ENCODE measurements at regions of chr5 and their contacts with region 1.

Region 1: DNA sequence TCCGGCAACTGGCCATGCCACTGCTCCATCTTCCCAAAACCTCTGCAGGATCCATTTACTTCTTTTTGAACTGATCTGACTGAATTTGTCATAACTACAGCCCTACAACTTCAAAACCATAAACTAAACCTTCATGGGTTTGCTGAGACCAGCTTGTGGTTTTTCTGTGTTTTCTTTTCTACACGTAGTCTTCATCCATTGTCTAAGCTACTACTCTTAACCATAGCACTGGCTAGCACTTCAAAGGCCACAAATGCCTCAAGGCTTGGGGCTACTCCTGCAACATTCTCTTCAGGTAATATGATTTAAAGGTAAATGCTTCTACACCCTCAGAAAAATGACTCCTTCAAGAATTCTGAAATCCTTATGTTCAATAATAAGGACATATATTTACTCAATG is 9.0 kb upstream of the KIF2A start:
- DNase-seq: peak in 2 of 14 experiments; percentile 31 to 36
- ATAC-seq: peak; percentile 10
- H3K4me3 ChIP-seq: peak overlapping the region; percentile 4
- H3K4me3 Mint-ChIP-seq: peak overlapping the region; percentile 72
- H3K27ac ChIP-seq: no peak overlapping the region
- H3K27ac Mint-ChIP-seq: peak overlapping the region; percentile 88
- H3K4me1 ChIP-seq: peaks cover 44% of the 10 kb centered on the region
- H3K4me1 Mint-ChIP-seq: peaks cover 78% of the 10 kb centered on the region
- H3K27me3 ChIP-seq: no peaks in the 10 kb centered on the region
- H3K27me3 Mint-ChIP-seq: no peaks in the 10 kb centered on the region
- CTCF ChIP-seq: no peak

Region 2: DNA sequence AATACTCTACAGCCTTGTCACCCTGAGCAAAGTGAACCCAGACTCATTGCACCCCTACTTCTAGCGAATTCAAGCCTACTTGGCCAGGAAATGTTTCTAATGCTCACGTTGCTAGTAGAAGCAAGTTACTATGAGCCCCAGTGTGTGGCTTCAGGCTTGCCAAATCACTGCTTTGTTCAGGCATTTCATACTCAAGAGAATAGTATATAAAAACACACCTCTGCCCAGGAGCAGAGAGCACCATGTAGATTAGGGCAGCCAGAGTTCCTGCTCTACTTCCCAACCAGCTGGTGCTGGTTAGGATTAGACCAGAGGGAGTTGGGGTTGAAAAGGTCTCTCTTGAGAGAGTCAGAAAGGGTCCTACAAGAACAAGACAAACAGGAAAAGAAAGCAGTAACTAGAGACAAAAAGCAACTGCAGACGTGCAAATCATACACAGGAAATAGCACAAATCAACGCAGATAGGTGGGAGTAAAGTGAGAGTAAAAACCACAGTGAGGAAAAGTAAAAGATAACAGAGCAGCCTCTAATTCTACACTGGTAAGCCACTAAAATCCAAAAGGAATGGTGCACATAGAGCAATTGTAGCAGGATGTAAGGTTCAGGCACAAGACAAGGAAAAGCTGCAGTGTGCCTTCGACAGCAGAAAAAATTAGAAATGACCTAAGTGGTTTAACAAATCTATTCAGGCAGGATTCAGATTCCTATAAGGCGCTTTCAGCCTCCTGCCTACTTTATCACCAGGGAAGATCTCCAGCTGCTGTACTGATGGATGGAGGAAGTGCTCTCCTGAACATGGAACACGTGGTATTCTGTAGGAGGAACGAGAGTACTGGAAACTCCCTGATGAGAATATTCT is 40.6 kb before region 1 on chr5:
- CTCF ChIA-PET with region 1: no interaction called
- POLR2A ChIA-PET with region 1: interaction called, 5 read pairs
- intact Hi-C with region 1: loop called in 1 of 2 experiments (anchors 2 kb)
- DNase-seq: peak in 10 of 14 experiments; percentile 1 to 73 (median 14)
- ATAC-seq: peak; percentile 87
- H3K4me3 ChIP-seq: peak overlapping the region; percentile 34
- H3K4me3 Mint-ChIP-seq: peak overlapping the region; percentile 66
- H3K27ac ChIP-seq: peak overlapping the region; percentile 63 to 66
- H3K27ac Mint-ChIP-seq: peak overlapping the region; percentile 92
- H3K4me1 ChIP-seq: peaks cover 33% of the 10 kb centered on the region
- H3K4me1 Mint-ChIP-seq: peaks cover 86% of the 10 kb centered on the region
- H3K27me3 ChIP-seq: no peaks in the 10 kb centered on the region
- H3K27me3 Mint-ChIP-seq: no peaks in the 10 kb centered on the region
- CTCF ChIP-seq: no peak

Region 3: DNA sequence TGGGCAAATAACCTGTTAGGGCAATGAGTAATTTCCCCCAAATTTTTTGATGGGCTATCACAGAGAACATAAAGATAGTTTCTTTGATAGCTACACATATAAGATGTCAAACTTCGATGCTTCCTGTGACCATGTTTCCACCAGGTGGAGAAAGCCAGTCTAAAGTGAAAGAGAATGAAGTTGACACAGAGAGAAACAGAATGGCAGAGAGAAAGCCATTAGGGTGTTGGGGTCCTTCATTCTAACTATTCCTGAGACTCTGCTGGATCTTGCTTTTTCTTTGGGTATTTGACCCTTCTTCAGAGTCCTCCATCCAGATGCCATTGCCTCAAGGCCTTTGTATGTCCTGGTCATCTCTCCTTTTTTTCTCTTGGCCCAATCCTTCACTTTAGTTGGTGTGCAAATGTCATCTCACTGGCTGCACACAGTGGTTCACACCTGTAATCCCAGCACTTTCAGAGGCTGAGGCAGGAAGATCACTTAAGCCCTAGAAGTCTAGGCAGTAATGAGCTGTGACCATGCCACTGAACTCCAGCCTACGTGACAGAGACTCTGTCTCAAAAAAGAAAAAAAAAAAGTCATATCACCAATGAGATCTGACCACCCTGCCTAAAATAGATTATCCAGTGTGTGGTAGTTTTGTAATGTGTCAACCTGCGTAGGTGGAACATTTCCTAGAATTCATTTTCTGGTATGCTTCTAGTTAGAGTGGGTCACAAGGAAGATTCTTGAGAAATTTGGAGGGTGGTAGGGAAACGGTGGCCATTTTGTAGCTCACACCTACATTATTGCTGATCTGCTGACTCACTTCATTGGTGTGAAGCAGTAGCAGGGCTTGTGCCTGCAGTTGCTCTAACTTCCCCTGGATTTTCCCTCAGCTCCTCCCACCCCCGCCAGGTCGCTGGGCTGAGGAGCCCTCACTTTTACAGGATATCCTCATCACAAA is 11.8 kb before region 1 on chr5:
- CTCF ChIA-PET with region 1: no interaction called
- POLR2A ChIA-PET with region 1: interaction called, 12 read pairs
- intact Hi-C with region 1: no loop called
- DNase-seq: peak in 4 of 14 experiments; percentile 4 to 67 (median 36)
- ATAC-seq: peak; percentile 39
- H3K4me3 ChIP-seq: no peak overlapping the region
- H3K4me3 Mint-ChIP-seq: no peak overlapping the region
- H3K27ac ChIP-seq: no peak overlapping the region
- H3K27ac Mint-ChIP-seq: no peak overlapping the region
- H3K4me1 ChIP-seq: peaks cover 15% of the 10 kb centered on the region
- H3K4me1 Mint-ChIP-seq: peaks cover 59% of the 10 kb centered on the region
- H3K27me3 ChIP-seq: no peaks in the 10 kb centered on the region
- H3K27me3 Mint-ChIP-seq: no peaks in the 10 kb centered on the region
- CTCF ChIP-seq: no peak

Region 4: GRCh38 chr5:62354028-62354874 is 57.2 kb after region 1 on chr5:
- CTCF ChIA-PET with region 1: interaction called, 8 read pairs
- POLR2A ChIA-PET with region 1: no interaction called
- intact Hi-C with region 1: loop called in 1 of 2 experiments (anchors 1 kb)
- DNase-seq: peak in 4 of 14 experiments; percentile 47 to 75 (median 72)
- ATAC-seq: peak; percentile 67
- H3K4me3 ChIP-seq: no peak overlapping the region
- H3K4me3 Mint-ChIP-seq: no peak overlapping the region
- H3K27ac ChIP-seq: no peak overlapping the region
- H3K27ac Mint-ChIP-seq: peak overlapping the region; percentile 70
- H3K4me1 ChIP-seq: no peaks in the 10 kb centered on the region
- H3K4me1 Mint-ChIP-seq: peaks cover 7% of the 10 kb centered on the region
- H3K27me3 ChIP-seq: no peaks in the 10 kb centered on the region
- H3K27me3 Mint-ChIP-seq: no peaks in the 10 kb centered on the region
- CTCF ChIP-seq: peak; percentile 84

Measured in CD4-positive, alpha-beta T cell (primary cell).